Common myeloid progenitor, CD34-positive (primary cell): ENCODE measurements at regions of chr7 and their contacts with region 1.

Region 1: GRCh38 chr7:2665359-2665791 is 22.6 kb upstream of the AMZ1 start:
- DNase-seq: no peak
- H3K4me3 ChIP-seq: no peak overlapping the region
- H3K27ac ChIP-seq: no peak overlapping the region
- H3K4me1 ChIP-seq: no peaks in the 10 kb centered on the region
- H3K27me3 ChIP-seq: no peaks in the 10 kb centered on the region

Region 2: DNA sequence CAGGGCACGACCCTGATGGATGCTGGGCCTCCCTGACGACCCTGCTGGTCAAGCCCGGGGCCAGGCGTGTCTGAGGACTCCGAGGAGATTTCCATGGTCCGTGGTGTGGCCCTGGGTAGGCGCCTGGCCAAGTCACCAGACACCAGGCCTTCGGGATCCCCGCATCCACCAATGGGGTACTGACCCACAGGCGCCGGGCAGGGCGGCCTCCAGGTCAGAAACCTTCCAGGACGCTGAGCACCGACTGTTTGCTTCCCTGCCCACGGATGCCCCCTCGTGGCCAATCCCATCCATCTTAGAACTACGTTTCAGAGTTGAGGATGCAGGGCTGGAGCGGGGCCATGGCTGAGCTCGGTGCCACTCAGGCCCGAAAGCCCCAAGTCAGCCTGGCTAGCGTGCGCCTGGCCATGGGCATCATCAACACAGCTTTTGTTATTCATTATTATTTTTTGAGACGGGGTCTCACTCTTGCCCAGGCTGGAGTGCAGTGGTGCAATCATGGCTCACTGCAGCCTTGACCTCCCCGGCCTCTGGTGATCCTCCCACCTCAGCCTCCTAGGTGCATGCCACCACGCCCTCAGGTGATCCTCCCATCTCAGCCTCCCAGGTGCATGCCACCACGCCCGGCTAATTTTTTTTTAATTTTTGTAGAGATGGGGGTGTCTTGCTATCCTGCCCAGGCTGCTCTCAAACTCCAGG is 15.6 kb after region 1 on chr7:
- CTCF ChIA-PET with region 1: interaction called, 18 read pairs
- POLR2A ChIA-PET with region 1: no interaction called
- DNase-seq: peak; percentile 49 to 67 (median 60)
- H3K4me3 ChIP-seq: no peak overlapping the region
- H3K27ac ChIP-seq: no peak overlapping the region
- H3K4me1 ChIP-seq: peaks cover 0 to 4% (median 1%) of the 10 kb centered on the region in 4 experiments
- H3K27me3 ChIP-seq: peaks cover 0 to 2% (median 0%) of the 10 kb centered on the region in 5 experiments